T-cell (primary cell): ENCODE measurements at regions of chr2 and their contacts with region 1.

Region 1: GRCh38 chr2:135890835-135891234 is 14.6 kb upstream of the MCM6 start:
- DNase-seq: no peak
- ATAC-seq: no peak
- H3K4me3 ChIP-seq: no peak overlapping the region
- H3K4me3 Mint-ChIP-seq: no peak overlapping the region
- H3K27ac ChIP-seq: no peak overlapping the region
- H3K27ac Mint-ChIP-seq: no peak overlapping the region
- H3K4me1 ChIP-seq: no peaks in the 10 kb centered on the region
- H3K4me1 Mint-ChIP-seq: no peaks in the 10 kb centered on the region
- H3K27me3 ChIP-seq: no peaks in the 10 kb centered on the region
- H3K27me3 Mint-ChIP-seq: peaks cover 0 to 2% of the 10 kb centered on the region in 2 donors

Region 2: GRCh38 chr2:135728064-135728743 is 162.6 kb before region 1 on chr2:
- CTCF ChIA-PET with region 1: no interaction called
- POLR2A ChIA-PET with region 1: no interaction called
- DNase-seq: no peak
- ATAC-seq: no peak
- H3K4me3 ChIP-seq: no peak overlapping the region
- H3K4me3 Mint-ChIP-seq: no peak overlapping the region
- H3K27ac ChIP-seq: no peak overlapping the region
- H3K27ac Mint-ChIP-seq: peak overlapping the region in 1 of 2 donors; percentile 12
- H3K4me1 ChIP-seq: peaks cover 6 to 7% of the 10 kb centered on the region in 2 experiments
- H3K4me1 Mint-ChIP-seq: peaks cover 0 to 9% (median 8%) of the 10 kb centered on the region in 3 donors
- H3K27me3 ChIP-seq: no peaks in the 10 kb centered on the region
- H3K27me3 Mint-ChIP-seq: no peaks in the 10 kb centered on the region

Region 3: GRCh38 chr2:135876066-135876711 is 14.6 kb before region 1 on chr2 and contains the start of gene MCM6:
- CTCF ChIA-PET with region 1: no interaction called
- POLR2A ChIA-PET with region 1: interaction called, 4 to 10 read pairs
- DNase-seq: peak; percentile 93 to 99 (median 96)
- ATAC-seq: peak; percentile 90 to 97 (median 94)
- H3K4me3 ChIP-seq: peak within 1 kb of the TSS; percentile 61 to 93
- H3K4me3 Mint-ChIP-seq: peak within 1 kb of the TSS; percentile 80 to 91 (median 90)
- H3K27ac ChIP-seq: peak within 1 kb of the TSS; percentile 91
- H3K27ac Mint-ChIP-seq: peak within 1 kb of the TSS; percentile 92 to 95
- H3K4me1 ChIP-seq: peaks cover 5 to 22% of the 10 kb centered on the region in 2 experiments
- H3K4me1 Mint-ChIP-seq: peaks cover 36 to 50% (median 48%) of the 10 kb centered on the region in 3 donors
- H3K27me3 ChIP-seq: no peaks in the 10 kb centered on the region
- H3K27me3 Mint-ChIP-seq: no peaks in the 10 kb centered on the region
- total RNA-seq, gene MCM6: 20.8 to 29.2 (median 26.1) TPM

Region 4: GRCh38 chr2:136086253-136087016 is 195.6 kb after region 1 on chr2:
- CTCF ChIA-PET with region 1: no interaction called
- POLR2A ChIA-PET with region 1: interaction called in 1 of 2 experiments, 11 read pairs
- DNase-seq: no peak
- ATAC-seq: no peak
- H3K4me3 ChIP-seq: no peak overlapping the region
- H3K4me3 Mint-ChIP-seq: no peak overlapping the region
- H3K27ac ChIP-seq: no peak overlapping the region
- H3K27ac Mint-ChIP-seq: peak overlapping the region in 1 of 2 donors; percentile 57
- H3K4me1 ChIP-seq: no peaks in the 10 kb centered on the region
- H3K4me1 Mint-ChIP-seq: peaks cover 6 to 10% (median 9%) of the 10 kb centered on the region in 3 donors
- H3K27me3 ChIP-seq: no peaks in the 10 kb centered on the region
- H3K27me3 Mint-ChIP-seq: no peaks in the 10 kb centered on the region